HCT116 (cell line): ENCODE measurements at regions of chr9 and their contacts with region 1.

Region 1: DNA sequence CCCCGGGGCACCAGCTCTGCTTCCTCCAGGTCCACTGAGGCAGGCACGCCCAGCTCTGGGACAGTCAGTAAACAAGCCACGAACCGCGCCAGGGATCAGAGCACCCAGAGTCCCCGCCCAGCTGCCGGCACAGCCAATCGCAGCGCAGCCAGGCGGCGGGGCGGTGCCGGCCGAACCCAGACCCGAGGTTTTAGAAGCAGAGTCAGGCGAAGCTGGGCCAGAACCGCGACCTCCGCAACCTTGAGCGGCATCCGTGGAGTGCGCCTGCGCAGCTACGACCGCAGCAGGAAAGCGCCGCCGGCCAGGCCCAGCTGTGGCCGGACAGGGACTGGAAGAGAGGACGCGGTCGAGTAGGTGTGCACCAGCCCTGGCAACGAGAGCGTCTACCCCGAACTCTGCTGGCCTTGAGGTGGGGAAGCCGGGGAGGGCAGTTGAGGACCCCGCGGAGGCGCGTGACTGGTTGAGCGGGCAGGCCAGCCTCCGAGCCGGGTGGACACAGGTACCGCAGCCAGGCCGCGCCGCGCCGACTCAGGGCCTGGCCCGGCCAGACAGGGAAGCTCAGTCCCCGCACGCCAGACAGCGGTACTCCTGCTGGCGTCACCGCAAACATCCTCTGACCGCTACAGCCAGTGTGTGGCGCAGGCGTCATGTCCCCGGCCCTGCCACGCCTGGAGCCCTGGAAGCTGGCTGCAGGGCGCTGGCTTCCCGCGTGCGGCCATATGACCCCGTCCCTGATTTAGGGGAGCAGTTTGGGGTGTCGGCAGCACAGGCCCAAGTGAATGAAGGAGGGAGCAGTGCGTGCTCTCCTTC is at the start of gene CTSL:
- DNase-seq: peak; percentile 59
- ATAC-seq: peak; percentile 91
- H3K4me3 ChIP-seq: peak within 1 kb of the TSS; percentile 78 to 90
- H3K27ac ChIP-seq: peak within 1 kb of the TSS; percentile 68
- H3K4me1 ChIP-seq: peaks cover 9 to 14% of the 10 kb centered on the region in 2 experiments; a peak in 3 of 4 replicates
- H3K27me3 ChIP-seq: no peaks in the 10 kb centered on the region
- CTCF ChIP-seq: peak in 2 of 3 experiments; percentile 13 to 20; a peak in 1 of 6 replicates
- POLR2A ChIP-seq: peak; percentile 86
- RAD21 ChIP-seq: peak; percentile 55
- total RNA-seq, gene CTSL: 63.1 TPM

Region 2: DNA sequence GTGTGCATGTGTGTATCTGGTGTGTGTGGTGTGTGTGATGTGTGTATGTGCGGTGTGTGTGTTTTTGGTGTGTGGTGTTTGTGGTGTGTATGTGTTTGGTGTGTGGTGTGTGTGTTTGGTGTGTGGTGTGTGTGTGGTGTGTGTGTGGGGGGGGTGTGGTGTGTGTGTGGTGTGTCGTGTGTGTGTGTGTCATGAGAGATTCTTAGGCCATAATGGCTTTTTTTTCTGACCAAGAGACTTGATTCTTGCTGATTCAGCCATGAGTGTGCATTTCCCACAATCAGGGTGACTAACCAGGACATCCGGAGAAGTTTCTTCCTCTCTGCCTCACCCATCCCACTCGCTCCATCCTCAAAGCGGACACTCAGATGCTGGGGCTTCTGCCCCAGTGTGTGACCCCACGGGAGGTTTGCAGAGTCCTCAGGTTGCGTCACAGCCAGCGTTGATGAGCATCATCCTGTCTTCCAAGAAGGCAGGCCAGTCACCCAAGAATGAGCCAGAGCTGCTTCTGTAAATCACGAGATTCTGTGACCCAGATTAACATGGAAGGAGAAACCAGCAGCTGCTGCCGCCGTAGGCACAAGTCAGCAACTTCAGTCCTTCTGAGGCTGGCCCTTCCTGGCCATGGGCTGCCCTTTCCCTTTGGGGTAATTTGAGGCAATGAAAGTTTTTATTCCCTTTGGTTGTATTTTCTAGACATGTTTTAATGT is 12.7 kb before region 1 on chr9:
- CTCF ChIA-PET with region 1: interaction called, 5 read pairs
- POLR2A ChIA-PET with region 1: interaction called, 14 read pairs
- RAD21 ChIA-PET with region 1: no interaction called
- intact Hi-C with region 1: no loop called
- DNase-seq: peak; percentile 76
- ATAC-seq: peak; percentile 77
- H3K4me3 ChIP-seq: peak overlapping the region; percentile 23 to 48
- H3K27ac ChIP-seq: 0 out of 2 replicates have a peak overlapping the region, but pooled peaks have one; percentile 4
- H3K4me1 ChIP-seq: peaks cover 2 to 28% of the 10 kb centered on the region in 2 experiments; a peak in 2 of 4 replicates
- H3K27me3 ChIP-seq: no peaks in the 10 kb centered on the region
- CTCF ChIP-seq: no peak
- POLR2A ChIP-seq: no peak
- RAD21 ChIP-seq: no peak

Region 3: GRCh38 chr9:87792831-87793288 is 66.8 kb after region 1 on chr9:
- CTCF ChIA-PET with region 1: no interaction called
- POLR2A ChIA-PET with region 1: no interaction called
- RAD21 ChIA-PET with region 1: no interaction called
- intact Hi-C with region 1: loop called (anchors 2 kb)
- DNase-seq: peak; percentile 63
- ATAC-seq: peak; percentile 97
- H3K4me3 ChIP-seq: peak overlapping the region in 1 of 2 experiments; percentile 43
- H3K27ac ChIP-seq: no peak overlapping the region
- H3K4me1 ChIP-seq: peaks cover 5 to 23% of the 10 kb centered on the region in 2 experiments; a peak in 3 of 4 replicates
- H3K27me3 ChIP-seq: no peaks in the 10 kb centered on the region
- CTCF ChIP-seq: peak in 2 of 3 experiments; percentile 33 to 44; a peak in 3 of 6 replicates
- POLR2A ChIP-seq: no peak
- RAD21 ChIP-seq: peak; percentile 27; the same call in 1 of the 2 replicates